HEK293T (cell line): ENCODE measurements at regions of chr5 and their contacts with region 1.

Region 1: DNA sequence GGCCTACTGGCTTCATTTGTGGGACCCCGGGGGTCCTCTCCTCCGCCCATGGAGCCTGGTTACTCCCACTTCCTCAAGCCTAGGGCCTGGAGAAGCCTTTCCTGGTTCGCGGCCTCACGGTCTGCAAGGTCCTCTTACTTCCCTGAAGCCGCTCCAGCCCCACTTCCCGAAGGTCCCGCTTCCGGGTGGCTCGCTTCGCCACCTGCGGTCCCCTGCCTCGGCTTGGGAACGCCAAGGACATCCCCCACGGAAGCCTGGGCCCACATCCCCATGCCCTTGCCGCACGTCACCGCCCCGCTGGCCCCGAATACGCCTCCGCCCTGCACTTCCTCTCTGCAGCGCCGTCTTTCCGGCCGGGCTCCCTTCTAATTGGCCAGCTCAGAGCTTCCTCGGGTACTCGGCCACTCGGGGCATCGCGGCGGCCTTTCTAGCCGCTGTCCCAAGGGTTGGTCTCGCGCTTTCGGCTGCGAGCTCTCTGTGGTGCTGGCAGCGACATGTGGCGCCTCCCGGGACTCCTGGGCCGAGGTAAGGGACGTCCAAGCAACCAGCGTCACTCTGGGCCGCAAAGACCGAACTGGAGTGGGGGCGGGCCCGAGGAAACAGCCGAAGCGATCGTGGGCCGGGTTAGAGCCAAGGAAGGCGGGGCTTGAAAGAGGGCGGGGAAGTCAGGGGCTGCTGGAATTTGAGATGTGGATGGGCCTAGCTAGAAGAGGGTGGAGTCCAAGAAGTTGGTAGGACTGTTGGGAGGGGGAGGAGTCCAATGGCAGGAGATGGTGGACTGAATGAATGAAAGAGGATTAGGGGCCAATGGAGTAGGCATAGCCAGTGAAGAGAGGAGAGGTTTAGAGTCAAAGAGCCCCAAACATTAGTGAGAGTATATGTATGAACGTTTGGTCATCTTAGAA is at the start of gene DELE1:
- DNase-seq: peak; percentile 91

Region 2: DNA sequence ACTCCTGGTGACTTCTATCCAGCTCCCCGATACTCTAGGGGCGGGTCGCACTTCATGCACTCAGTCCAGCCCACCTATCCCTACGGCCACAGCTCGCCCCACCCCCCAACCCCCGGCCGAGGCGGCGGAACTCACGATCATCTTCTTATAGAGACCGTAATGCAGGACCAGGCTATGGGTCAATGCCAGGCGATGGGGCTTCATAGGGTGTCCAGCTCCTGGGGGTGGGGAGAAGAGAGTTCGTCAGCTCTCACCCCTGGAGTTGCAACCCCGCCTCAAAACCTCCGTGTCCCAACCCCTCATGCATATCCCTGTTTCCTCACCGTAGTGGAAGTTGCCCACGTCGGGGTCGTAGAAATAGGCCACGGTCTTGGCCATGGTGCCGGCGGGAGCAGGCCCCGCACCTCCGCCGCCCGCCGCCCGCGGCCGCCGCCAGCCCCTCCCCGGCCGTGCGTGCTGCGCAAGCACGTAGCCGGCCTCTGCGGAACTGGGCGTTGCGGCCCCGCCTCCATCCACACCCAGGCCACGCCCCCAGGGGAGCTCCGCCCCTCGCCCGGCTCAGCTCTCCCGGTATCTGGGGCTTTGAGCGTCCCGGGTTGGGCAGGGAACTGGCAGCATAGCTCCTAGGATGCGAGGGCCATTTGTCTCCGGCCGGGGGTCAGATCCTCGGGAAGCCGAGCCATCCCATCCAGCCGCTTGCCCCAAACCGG is 287.1 kb before region 1 on chr5 and contains the starts of genes HDAC3 and RELL2:
- CTCF ChIA-PET with region 1: no interaction called
- POLR2A ChIA-PET with region 1: interaction called, 12 read pairs
- DNase-seq: peak; percentile 98

Region 3: DNA sequence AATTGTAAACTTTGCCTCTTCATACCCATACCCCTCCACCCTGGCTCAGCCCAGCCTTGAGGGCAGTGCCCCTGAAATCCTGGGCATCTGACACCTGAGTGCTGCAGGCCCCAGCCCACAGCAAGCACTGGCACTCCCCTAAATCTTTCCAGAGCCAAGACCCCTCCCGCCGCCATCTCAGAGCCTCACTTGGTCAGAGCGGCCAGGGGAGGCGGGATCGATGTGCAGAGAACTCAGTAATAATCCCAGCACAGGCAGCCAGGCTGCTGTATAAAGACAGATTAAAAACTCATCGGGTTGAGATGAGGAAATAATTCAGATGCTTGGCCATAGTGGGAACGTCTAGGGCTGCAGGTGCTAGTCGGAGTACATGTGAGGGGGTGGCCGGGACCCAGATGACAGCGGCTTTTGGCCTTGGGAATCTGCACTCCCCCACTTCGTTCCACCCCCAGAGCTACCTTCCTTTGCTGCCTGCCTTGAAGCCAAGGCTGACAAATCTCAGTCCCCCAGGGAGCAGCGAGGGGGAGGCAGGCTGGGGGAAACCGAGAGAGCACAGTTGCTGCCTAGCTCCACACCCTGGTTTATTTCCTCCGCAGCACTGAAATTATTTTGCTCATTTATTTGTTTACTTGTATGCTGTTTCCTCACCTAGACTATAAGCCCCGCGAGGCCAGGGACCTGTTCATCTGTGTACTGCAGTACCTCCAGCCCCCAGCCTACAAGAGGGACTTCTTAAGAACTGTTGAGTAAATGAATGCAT is 222.2 kb before region 1 on chr5:
- CTCF ChIA-PET with region 1: no interaction called
- POLR2A ChIA-PET with region 1: no interaction called
- DNase-seq: no peak

Region 4: DNA sequence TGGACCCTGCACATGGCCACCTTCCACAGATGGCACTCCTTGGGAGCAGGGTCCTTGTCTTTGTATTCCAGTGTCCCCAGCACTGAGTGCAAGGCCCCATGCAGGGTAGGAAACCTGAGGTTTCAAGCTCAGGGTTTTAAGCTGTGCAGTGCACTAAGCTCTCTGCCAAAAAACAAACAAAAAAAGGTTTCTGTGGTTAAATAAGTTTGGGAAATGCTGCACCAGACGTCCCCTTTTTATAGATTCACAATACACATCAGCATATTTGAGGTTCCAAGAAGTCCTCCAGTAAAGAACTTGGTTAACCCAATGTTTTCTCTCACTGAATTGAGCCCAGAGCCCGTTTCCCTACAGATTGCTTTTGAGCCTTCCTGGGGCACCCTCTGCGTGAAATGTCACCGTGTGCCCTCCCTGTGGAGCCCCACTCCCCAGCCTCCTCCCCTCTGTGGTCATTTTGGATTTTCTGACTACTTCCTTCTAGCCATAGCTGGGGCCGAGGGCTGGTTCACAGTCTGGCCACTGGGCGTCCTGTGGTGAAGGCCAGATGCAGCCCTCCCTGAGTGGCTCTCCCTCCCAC is 17.1 kb after region 1 on chr5:
- CTCF ChIA-PET with region 1: interaction called, 6 read pairs
- POLR2A ChIA-PET with region 1: interaction called, 38 read pairs
- DNase-seq: no peak

Region 5: DNA sequence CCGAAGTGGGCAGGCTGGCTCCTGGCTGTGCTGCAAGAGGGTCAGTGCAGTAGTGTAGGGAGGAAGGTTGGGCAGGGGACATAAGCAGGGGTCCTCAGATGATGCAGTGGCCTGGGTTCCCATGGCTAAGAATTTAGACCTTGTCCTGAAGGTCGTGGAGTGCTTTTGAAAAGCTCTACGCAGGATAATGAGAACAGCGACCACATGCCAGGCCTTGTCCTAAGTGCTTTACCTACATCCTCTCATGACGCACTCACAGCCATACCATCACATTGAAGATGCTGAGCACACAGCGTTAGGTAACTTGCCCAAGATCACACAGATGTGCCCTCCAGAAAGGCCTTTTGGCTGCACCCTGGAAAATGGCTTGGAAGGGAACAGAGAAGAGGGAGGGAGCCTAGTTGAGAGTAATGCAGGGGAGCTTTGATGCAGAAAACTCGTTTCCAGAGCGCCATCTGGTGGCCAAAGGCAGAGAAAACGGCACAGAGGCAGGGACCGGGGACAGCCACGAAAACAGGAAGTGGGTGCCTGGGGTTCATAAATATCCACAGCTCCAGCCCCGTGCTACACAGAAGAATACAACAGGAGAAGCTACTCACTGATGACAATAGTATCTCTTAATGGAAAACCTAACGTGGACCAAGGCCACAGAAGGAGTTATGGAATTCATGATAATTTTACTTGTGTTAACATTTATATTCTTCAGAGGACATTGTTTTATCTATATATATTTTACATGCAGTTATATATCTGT is 36.9 kb after region 1 on chr5:
- CTCF ChIA-PET with region 1: interaction called, 4 read pairs
- POLR2A ChIA-PET with region 1: interaction called, 16 read pairs
- DNase-seq: peak; percentile 85

Region 6: DNA sequence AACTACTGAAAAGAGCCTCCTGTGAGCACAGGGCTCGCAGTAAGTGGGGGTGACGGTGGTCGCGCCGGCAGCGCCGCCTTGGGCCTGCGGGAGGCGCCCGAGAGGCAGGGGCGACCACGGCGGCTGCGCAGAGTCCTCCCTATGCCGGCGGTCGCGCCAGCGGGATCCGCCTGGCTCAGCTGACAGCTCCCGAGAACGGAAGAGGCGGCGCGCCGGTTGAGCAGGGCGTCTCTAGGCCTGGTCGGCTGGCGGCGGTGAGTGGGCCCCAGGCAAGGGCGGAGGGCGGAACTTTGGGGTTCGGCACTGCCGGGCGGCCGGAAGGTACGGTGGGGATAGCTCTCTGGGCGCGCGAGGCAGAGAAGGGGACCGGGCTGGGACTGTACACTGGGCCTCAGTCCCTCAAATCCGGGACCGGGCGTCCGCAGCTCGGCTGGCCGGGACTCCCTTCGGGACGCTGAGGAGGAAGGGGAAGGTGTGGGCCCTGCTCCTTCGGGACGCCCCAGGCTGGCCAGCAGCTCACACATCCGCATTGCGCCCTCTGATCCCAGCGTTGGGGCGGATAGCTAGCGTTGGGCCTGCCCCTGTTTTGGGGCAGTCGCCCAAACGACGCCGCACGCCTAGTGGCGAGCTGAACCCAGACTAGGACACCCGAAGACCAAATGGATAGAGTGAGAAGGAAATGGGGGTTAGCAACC is 45.4 kb after region 1 on chr5 and contains the start of gene RNF14:
- CTCF ChIA-PET with region 1: interaction called, 5 read pairs
- POLR2A ChIA-PET with region 1: interaction called, 15 read pairs
- DNase-seq: peak; percentile 95

Region 7: GRCh38 chr5:142215915-142216681 is 292.4 kb after region 1 on chr5:
- CTCF ChIA-PET with region 1: no interaction called
- POLR2A ChIA-PET with region 1: no interaction called
- DNase-seq: no peak